ENCODE measurements at regions of chr1 and their contacts with region 1.

Region 1: GRCh38 chr1:178733972-178734371 is 8.9 kb downstream of the RALGPS2 start:
- DNase-seq: no peak
- ATAC-seq: no peak
- H3K4me3 ChIP-seq: no peak overlapping the region
- H3K27ac ChIP-seq: no peak overlapping the region
- H3K4me1 ChIP-seq: no peaks in the 10 kb centered on the region
- H3K27me3 ChIP-seq: peaks cover 3% of the 10 kb centered on the region; the same call in 1 of the 2 replicates
- CTCF ChIP-seq: peak; percentile 15; the same call in 1 of the 2 replicates

Region 2: DNA sequence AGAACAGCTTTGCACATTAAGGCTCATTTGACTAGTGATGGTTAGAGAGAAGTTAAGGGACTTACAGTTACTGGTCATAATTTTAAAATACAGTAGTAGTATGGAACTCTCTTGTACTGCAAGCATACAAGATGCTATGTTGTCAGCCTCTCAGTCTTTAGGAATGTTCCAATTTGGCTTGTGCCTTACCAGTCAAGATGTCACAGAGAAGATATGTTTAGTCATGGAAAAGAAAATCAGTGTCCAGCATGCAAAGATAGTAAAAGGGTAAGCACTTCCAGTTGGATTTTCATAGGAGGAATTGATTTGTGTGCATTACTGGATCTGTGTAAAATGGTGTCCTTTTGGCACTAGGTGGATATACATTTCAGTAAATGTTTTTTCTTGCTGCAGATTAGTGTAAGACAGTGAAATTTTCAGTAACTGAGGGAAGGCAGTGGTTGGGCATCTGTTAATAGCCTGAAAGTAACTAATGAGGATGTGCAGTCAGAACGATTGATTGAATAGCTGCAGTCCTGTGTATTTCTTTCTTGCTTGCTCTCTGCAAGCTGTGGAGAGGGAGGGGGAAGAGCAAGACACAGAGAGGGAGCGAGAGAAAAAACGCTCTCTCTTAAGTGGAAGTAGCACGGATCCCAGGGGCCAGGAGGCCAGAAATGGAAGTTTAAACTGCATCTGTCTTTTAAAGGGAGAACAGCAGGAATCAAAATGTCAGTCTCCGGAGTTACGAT is 345.4 kb before region 1 on chr1:
- CTCF ChIA-PET with region 1: no interaction called
- POLR2A ChIA-PET with region 1: no interaction called
- in situ Hi-C with region 1: no loop called
- intact Hi-C with region 1: no loop called
- DNase-seq: no peak
- ATAC-seq: no peak
- H3K4me3 ChIP-seq: no peak overlapping the region
- H3K27ac ChIP-seq: no peak overlapping the region
- H3K4me1 ChIP-seq: no peaks in the 10 kb centered on the region
- H3K27me3 ChIP-seq: no peaks in the 10 kb centered on the region
- CTCF ChIP-seq: no peak

Region 3: DNA sequence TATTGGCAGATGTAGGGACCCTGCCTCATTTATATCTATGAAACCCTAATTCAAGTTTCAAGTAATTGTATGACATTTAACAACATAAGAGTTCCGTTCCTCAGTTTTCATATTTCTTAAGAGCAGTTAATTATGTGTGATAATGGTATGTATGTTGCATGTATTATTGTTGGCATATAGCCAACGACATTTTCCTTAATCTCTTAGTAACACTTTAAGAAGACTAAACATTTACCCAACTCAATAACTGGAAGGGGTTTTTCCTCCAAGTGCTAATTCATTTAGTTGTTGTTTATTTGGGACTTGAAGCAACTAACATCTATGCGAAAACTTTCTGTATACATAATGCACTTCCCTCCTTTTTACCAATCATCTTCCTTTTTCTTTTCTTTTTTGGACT is 10.4 kb before region 1 on chr1:
- CTCF ChIA-PET with region 1: no interaction called
- POLR2A ChIA-PET with region 1: no interaction called
- in situ Hi-C with region 1: no loop called
- intact Hi-C with region 1: no loop called
- DNase-seq: no peak
- ATAC-seq: no peak
- H3K4me3 ChIP-seq: no peak overlapping the region
- H3K27ac ChIP-seq: no peak overlapping the region
- H3K4me1 ChIP-seq: 0 out of 2 replicates have a peak, but pooled peaks cover 7% of the 10 kb centered on the region
- H3K27me3 ChIP-seq: peaks cover 30% of the 10 kb centered on the region
- CTCF ChIP-seq: no peak

Region 4: DNA sequence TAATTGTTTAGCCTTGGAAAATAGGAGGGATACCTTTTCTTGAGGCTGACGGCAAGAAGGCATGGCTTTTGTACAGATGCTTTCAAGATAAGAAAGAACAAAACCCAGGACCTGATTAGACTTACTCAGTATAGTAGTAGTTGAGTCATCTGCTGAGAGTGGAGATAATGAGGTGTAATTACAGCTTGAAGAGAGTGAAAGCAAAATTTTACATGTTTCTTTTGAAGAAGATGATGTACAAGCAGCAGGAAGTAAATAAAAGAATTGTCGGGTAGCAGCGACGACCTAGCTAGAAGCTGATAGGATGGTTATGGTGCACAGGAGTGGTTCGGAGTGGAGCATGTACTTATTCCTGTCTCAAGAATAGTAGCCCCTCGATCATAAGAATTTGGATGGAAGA is 130.4 kb after region 1 on chr1:
- CTCF ChIA-PET with region 1: no interaction called
- POLR2A ChIA-PET with region 1: no interaction called
- in situ Hi-C with region 1: no loop called
- intact Hi-C with region 1: no loop called
- DNase-seq: no peak
- ATAC-seq: no peak
- H3K4me3 ChIP-seq: no peak overlapping the region
- H3K27ac ChIP-seq: no peak overlapping the region
- H3K4me1 ChIP-seq: no peaks in the 10 kb centered on the region; the same call in 1 of the 2 replicates
- H3K27me3 ChIP-seq: no peaks in the 10 kb centered on the region; the same call in 1 of the 2 replicates
- CTCF ChIP-seq: no peak

Region 5: DNA sequence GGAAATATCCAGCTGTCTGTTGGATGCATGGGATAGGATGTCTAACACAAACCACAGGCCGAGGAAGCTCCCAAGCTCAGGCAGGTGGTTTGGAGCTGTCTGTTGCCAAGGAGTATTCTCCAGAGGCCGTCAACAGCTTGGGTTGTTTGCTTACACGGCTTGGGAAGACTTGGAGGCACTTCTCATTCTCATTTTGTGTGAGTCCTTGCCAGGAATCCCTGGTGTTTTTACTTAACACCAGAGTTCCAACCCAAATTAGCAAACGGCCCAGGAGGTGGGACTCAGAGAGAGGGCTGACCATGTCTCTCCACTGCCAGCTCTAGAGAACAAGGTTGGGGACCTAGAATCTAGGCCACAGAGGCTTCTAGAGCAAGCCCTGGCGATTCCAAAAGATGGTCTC is 219.1 kb after region 1 on chr1:
- CTCF ChIA-PET with region 1: no interaction called
- POLR2A ChIA-PET with region 1: interaction called, 10 read pairs
- in situ Hi-C with region 1: no loop called
- intact Hi-C with region 1: no loop called
- DNase-seq: no peak
- ATAC-seq: no peak
- H3K4me3 ChIP-seq: no peak overlapping the region
- H3K27ac ChIP-seq: no peak overlapping the region
- H3K4me1 ChIP-seq: no peaks in the 10 kb centered on the region
- H3K27me3 ChIP-seq: no peaks in the 10 kb centered on the region; the same call in 1 of the 2 replicates
- CTCF ChIP-seq: no peak

Measured in Panc1 (cell line).